ENCODE measurements at regions of chr4 and their contacts with region 1.

Region 1: DNA sequence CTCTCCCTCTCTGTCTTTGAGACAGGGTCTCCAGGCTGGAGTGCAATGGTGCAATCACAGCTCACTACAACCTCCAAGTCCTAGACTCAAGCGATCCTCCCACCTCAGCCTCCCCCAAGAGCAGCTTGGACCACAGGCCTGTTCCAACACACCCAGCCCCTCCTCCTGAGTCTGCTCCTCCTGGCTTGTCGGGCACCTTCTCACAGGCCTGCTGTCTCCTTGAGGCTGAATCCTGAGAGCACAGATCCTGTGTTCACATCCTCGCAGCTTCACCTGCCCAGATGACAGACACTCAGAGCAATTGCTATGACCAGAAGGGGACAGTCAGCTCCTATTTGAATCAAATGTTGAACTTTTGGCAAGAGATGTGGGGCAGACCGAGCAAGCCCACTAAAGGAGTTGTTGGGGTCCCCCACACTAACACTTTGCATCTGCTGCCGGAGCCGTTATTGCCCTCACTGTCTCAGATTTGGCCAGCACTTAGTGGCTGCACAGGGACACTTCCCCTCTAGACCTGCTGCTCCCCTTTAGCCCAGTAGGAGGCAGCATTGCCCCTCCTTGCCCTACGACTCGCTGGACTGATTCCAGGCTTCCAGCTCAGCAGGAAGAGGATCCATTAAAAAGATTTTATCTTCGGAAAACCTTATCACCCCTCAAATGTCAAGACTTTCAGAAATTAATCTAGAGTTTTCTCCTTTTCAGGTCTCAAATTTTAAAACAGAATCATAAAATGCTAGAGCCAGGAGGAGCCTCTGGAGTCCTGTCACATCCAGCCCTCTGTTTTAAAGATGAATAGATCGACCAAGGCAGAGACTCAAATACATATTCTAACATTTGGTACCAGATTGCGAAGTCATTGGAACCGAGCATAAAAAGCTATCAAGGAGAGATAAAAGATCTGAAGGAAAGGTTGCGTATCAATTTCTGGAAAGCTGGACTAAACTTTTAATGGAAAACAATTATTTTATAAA is 113.7 kb downstream of the USP46 start:
- DNase-seq: peak; percentile 49
- H3K4me3 ChIP-seq: no peak overlapping the region
- H3K27ac ChIP-seq: no peak overlapping the region
- H3K4me1 ChIP-seq: peaks cover 16% of the 10 kb centered on the region
- H3K27me3 ChIP-seq: no peaks in the 10 kb centered on the region
- CTCF ChIP-seq: peak; percentile 98

Region 2: GRCh38 chr4:52103319-52103718 is 442.1 kb before region 1 on chr4:
- CTCF ChIA-PET with region 1: no interaction called
- dilution Hi-C with region 1: no loop called
- in situ Hi-C with region 1: no loop called
- intact Hi-C with region 1: loop called (anchors 2 kb)
- DNase-seq: peak; percentile 40
- H3K4me3 ChIP-seq: no peak overlapping the region
- H3K27ac ChIP-seq: no peak overlapping the region
- H3K4me1 ChIP-seq: peaks cover 25% of the 10 kb centered on the region
- H3K27me3 ChIP-seq: no peaks in the 10 kb centered on the region
- CTCF ChIP-seq: peak; percentile 25 to 54

Region 3: DNA sequence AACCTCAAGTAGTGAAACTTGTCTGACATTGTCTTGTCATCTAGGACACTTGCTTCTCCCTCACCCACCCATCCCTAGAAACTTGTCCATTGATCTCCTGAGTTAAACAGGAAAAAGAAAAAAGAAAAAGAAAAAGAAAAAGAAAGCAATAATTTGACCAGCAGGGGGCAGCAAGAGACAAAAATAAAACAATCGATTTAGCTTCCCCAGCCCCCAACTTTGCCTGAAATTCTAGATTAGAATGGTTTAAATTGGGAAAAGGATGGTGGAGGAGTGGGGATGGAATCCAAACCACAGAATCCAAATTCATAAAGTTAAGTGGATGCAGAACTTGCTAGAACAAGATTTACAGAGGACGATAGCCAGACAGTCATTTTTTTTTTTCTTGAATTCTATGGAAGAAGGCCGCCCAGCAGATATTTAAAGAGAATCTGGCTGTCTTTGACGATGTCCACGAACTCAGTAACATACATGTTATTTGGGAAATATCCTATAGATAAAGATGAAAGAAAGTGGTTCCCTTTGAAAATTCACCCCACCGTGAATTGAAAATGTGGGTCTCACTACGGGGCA is 169.2 kb before region 1 on chr4:
- CTCF ChIA-PET with region 1: no interaction called
- dilution Hi-C with region 1: no loop called
- in situ Hi-C with region 1: no loop called
- intact Hi-C with region 1: loop called (anchors 2 kb)
- DNase-seq: peak; percentile 29
- H3K4me3 ChIP-seq: no peak overlapping the region
- H3K27ac ChIP-seq: no peak overlapping the region
- H3K4me1 ChIP-seq: no peaks in the 10 kb centered on the region
- H3K27me3 ChIP-seq: no peaks in the 10 kb centered on the region
- CTCF ChIP-seq: peak; percentile 37 to 55

Region 4: GRCh38 chr4:52659001-52659721 is 113.8 kb after region 1 on chr4 and contains the start of gene USP46:
- CTCF ChIA-PET with region 1: interaction called, 3 read pairs
- dilution Hi-C with region 1: no loop called
- in situ Hi-C with region 1: loop called in 1 of 2 experiments (anchors 10 kb)
- intact Hi-C with region 1: loop called (anchors 2 kb)
- DNase-seq: peak; percentile 70
- H3K4me3 ChIP-seq: peak within 1 kb of the TSS; percentile 72 to 85 (median 83)
- H3K27ac ChIP-seq: peak within 1 kb of the TSS; percentile 77
- H3K4me1 ChIP-seq: peaks cover 10% of the 10 kb centered on the region
- H3K27me3 ChIP-seq: no peaks in the 10 kb centered on the region
- CTCF ChIP-seq: no peak
- total RNA-seq, gene USP46: 15.2 to 24.9 TPM

Region 5: GRCh38 chr4:52712172-52712990 is 167.0 kb after region 1 on chr4:
- CTCF ChIA-PET with region 1: no interaction called
- dilution Hi-C with region 1: no loop called
- in situ Hi-C with region 1: loop called in 1 of 2 experiments (anchors 5 kb)
- intact Hi-C with region 1: loop called (anchors 2 kb)
- DNase-seq: peak; percentile 97
- H3K4me3 ChIP-seq: peak overlapping the region; percentile 80 to 85 (median 82)
- H3K27ac ChIP-seq: peak overlapping the region; percentile 84
- H3K4me1 ChIP-seq: peaks cover 31% of the 10 kb centered on the region
- H3K27me3 ChIP-seq: no peaks in the 10 kb centered on the region
- CTCF ChIP-seq: no peak

Region 6: GRCh38 chr4:52861879-52862616 is 316.7 kb after region 1 on chr4 and contains the start of gene RASL11B:
- CTCF ChIA-PET with region 1: no interaction called
- dilution Hi-C with region 1: no loop called
- in situ Hi-C with region 1: no loop called
- intact Hi-C with region 1: loop called (anchors 5 kb)
- DNase-seq: peak; percentile 74
- H3K4me3 ChIP-seq: peak within 1 kb of the TSS; percentile 59 to 71 (median 62)
- H3K27ac ChIP-seq: no peak within 1 kb of the TSS
- H3K4me1 ChIP-seq: peaks cover 11% of the 10 kb centered on the region
- H3K27me3 ChIP-seq: no peaks in the 10 kb centered on the region
- CTCF ChIP-seq: no peak
- total RNA-seq, gene RASL11B: 2.4 to 3.5 TPM

Region 7: DNA sequence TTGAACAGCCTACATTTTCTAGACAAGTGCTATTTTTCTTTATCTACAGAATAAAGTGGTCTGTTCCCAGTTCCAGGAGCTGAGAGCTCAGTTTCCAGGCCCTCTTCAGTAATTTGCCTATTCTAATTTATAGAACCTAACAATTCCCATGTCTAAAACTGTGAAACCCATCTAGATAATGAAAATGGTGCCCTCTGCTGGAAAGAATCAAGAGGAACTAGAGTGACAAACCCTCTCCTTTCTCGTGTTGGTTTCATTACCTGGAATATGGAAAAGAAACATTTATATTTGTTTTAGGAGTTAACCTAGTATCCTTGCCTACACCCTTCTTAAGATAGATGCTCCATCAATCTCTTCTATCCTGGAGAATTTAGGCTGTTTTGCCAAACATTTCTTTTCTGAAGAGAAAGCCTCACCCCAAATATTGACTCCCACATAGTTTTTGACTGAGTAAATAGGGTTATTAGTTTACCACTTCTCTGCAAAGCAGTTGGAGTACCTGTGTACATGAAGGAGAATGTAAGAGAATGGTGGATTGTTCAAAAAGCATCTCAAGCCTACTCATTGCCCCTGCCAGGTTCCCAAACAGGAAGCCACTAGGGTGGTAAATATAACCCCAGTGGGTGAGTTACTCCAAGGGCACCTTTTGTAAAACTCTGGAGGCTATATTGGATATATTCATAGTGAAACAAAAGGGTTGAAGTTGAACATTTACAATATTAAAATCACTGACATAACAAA is 438.3 kb after region 1 on chr4:
- CTCF ChIA-PET with region 1: interaction called, 11 read pairs
- dilution Hi-C with region 1: no loop called
- in situ Hi-C with region 1: loop called (anchors 5 kb)
- intact Hi-C with region 1: loop called (anchors 2 kb)
- DNase-seq: peak; percentile 42
- H3K4me3 ChIP-seq: no peak overlapping the region
- H3K27ac ChIP-seq: no peak overlapping the region
- H3K4me1 ChIP-seq: peaks cover 10% of the 10 kb centered on the region
- H3K27me3 ChIP-seq: no peaks in the 10 kb centered on the region
- CTCF ChIP-seq: peak; percentile 58 to 64

Measured in mammary epithelial cell (primary cell).